ENCODE measurements at regions of chr7 and their contacts with region 1.

Region 1: GRCh38 chr7:98021588-98022351 is 31.8 kb upstream of the OCM2 start:
- DNase-seq: peak; percentile 18
- H3K4me3 ChIP-seq: no peak overlapping the region
- H3K27ac ChIP-seq: no peak overlapping the region
- H3K27me3 ChIP-seq: peaks cover 2% of the 10 kb centered on the region
- CTCF ChIP-seq: peak; percentile 90

Region 2: GRCh38 chr7:97845622-97846203 is 176.1 kb before region 1 on chr7:
- CTCF ChIA-PET with region 1: no interaction called
- POLR2A ChIA-PET with region 1: no interaction called
- DNase-seq: no peak
- H3K4me3 ChIP-seq: no peak overlapping the region
- H3K27ac ChIP-seq: no peak overlapping the region
- H3K27me3 ChIP-seq: no peaks in the 10 kb centered on the region
- CTCF ChIP-seq: peak; percentile 52

Region 3: DNA sequence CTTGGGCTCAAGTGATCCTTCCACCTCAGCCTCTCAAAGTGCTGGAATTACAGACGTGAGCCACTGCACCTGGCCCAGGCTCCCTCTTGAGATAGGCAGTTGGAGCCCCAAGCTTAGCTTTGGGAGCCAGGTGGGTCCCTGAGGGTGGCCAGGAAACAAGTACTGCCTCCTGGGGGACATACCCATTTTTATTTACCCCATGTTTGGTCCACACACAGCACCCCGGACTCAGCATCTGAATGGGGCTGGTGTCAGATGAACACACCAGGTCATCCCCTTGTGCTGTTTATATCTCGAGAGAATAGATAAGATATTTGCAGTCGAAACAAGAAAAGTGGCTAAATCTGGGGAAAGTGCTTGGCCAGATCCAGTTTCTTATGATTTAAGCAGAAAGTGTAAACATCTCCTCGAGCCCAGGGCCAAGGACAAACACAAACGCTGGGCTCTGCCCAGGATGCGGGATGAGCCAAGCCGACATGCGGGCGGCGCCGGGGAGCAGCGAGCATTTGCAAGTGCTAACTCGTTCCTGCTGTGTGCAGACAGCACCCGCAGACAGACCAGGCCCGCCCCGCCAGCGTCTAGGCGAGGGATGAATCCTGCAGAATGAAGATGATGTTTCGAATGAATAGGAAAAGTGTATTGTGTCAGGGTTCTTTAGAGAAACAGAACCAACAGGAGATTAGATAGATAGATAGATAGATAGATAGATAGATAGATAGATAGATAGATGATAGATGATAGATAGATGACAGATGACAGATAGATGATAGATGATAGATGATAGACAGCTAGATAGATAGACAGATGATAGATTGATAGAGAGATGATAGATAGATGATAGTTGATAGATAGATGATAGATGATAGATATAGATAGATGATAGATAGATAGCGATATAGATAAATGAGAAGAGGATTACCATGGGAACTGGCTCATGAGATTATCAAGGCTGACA is 12.6 kb after region 1 on chr7:
- CTCF ChIA-PET with region 1: interaction called, 14 read pairs
- POLR2A ChIA-PET with region 1: no interaction called
- DNase-seq: no peak
- H3K4me3 ChIP-seq: no peak overlapping the region
- H3K27ac ChIP-seq: no peak overlapping the region
- H3K27me3 ChIP-seq: no peaks in the 10 kb centered on the region
- CTCF ChIP-seq: no peak

Region 4: GRCh38 chr7:98040626-98041360 is 19.0 kb after region 1 on chr7:
- CTCF ChIA-PET with region 1: interaction called, 11 read pairs
- POLR2A ChIA-PET with region 1: no interaction called
- DNase-seq: no peak
- H3K4me3 ChIP-seq: no peak overlapping the region
- H3K27ac ChIP-seq: no peak overlapping the region
- H3K27me3 ChIP-seq: no peaks in the 10 kb centered on the region
- CTCF ChIP-seq: no peak

Region 5: DNA sequence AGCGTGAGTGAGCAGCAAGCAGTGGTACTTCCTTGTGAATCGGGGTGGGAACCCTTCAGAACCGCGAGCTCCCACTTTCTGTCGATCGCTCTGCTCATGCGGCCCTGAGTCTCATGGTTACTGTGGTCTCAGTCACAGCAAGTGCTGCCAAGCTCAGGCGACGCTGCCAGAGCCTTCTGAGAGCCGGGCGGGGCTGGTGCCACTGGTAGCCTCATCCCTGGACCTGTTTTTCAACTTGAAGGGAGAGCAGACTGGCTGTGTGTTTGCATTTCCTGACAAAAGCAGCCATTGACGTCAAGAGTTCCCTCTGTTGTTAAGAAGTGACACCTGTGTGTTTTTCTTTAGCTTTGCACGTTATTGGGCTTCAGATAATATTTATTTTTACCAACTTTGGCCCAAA is 156.6 kb after region 1 on chr7:
- CTCF ChIA-PET with region 1: interaction called, 36 read pairs
- POLR2A ChIA-PET with region 1: interaction called, 3 read pairs
- DNase-seq: no peak
- H3K4me3 ChIP-seq: no peak overlapping the region
- H3K27ac ChIP-seq: no peak overlapping the region
- H3K27me3 ChIP-seq: no peaks in the 10 kb centered on the region
- CTCF ChIP-seq: no peak

Measured in AG04450 (cell line).